Left ventricle myocardium superior (tissue), 1 donor: ENCODE measurements at regions of chr11 and their contacts with region 1.

Region 1: DNA sequence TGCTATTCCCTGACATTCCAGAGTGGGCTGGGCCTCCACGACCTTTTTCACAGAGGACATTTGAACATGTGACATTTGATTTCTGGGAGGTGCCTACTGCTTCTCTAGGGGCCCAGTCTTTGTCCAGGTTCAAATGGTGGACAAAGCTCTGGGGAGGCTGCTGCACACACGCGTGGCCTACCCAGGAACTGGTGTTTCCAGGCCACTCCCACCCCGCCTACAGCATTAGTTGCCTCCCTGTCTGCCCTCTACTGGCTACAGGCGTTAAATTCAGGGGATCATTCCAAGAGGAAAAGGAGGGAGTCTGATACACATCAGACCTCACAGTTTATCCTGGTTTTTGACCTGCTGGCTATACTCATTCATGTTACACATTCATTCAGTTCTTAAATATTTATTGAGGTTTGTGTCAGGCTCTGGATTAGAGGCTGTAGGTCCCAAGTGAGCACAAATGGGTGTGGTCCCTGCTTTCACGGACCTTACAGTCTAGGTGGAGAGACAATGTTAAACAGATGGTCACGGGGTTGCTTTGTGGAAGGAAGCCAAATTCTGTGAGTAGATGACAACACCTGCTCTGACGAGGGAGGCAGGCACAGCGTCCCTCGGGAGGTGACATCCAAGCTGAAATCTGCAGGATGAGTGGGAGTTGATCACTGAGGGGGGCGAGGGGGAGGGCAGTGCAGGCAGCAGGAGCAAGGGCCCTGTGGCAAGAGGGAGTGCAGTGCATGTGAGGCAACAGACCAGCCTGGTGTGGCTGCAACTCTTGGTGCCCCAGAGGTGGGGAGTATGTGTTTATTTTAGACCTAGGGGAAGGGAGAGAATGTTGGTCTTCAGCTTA is 11.8 kb downstream of the TUB start:
- DNase-seq: peak; percentile 71
- ATAC-seq: peak; percentile 65

Region 2: GRCh38 chr11:8006349-8006977 is 86.3 kb before region 1 on chr11:
- intact Hi-C with region 1: loop called (anchors 5 kb)
- DNase-seq: no peak
- ATAC-seq: peak; percentile 92

Region 3: GRCh38 chr11:8033305-8034105 is 59.3 kb before region 1 on chr11:
- intact Hi-C with region 1: no loop called
- DNase-seq: peak; percentile 86
- ATAC-seq: peak; percentile 59